ENCODE measurements at regions of chr2 and their contacts with region 1.

Region 1: DNA sequence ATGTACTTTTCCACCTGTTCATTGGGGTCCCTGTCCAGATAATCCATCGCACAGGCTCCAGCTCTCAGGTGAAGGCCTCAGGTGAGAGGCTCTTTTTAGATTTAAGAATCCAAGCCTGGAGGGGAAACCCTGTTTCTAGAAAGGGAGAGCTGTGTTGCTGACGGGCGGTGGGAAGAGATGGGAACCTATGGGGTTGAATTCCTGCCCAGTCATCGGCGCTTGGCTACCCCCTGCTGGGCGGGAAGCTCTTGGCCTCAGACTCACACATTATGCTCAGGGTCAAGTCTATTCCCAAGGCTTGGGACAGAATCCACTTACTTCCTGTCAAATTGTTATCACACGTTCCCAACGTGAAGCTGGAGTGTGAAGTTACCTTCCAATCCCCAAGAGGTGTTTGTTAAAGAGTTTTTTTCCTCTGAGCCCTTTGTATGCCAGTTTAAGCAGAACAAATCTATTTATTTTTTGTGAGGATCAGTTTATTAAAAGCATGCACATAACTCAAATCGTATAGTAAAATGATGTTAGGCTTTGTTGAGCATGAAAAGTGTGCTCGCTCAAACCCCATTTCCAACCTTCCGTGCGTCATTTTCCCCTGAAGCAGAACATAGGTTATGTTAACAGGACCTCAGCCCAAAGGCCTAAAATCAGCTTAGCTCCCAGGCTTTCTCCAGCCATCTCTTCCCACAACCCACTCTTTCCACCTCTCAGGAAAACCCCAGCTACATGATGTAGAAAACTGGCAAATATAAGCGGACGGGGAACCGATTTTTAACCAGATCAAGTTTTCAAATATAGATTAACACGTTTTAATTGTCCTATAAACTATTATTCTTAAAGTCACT is 181.7 kb upstream of the ETAA1 start:
- DNase-seq: peak; percentile 26
- H3K4me3 ChIP-seq: no peak overlapping the region
- H3K27ac ChIP-seq: peak overlapping the region; percentile 52 to 74 (median 64)
- H3K4me1 ChIP-seq: peaks cover 0 to 9% (median 0%) of the 10 kb centered on the region in 4 donors
- H3K27me3 ChIP-seq: no peaks in the 10 kb centered on the region
- CTCF ChIP-seq: peak; percentile 33 to 44 (median 35)
- EP300 ChIP-seq: no peak
- POLR2A ChIP-seq: no peak

Region 2: DNA sequence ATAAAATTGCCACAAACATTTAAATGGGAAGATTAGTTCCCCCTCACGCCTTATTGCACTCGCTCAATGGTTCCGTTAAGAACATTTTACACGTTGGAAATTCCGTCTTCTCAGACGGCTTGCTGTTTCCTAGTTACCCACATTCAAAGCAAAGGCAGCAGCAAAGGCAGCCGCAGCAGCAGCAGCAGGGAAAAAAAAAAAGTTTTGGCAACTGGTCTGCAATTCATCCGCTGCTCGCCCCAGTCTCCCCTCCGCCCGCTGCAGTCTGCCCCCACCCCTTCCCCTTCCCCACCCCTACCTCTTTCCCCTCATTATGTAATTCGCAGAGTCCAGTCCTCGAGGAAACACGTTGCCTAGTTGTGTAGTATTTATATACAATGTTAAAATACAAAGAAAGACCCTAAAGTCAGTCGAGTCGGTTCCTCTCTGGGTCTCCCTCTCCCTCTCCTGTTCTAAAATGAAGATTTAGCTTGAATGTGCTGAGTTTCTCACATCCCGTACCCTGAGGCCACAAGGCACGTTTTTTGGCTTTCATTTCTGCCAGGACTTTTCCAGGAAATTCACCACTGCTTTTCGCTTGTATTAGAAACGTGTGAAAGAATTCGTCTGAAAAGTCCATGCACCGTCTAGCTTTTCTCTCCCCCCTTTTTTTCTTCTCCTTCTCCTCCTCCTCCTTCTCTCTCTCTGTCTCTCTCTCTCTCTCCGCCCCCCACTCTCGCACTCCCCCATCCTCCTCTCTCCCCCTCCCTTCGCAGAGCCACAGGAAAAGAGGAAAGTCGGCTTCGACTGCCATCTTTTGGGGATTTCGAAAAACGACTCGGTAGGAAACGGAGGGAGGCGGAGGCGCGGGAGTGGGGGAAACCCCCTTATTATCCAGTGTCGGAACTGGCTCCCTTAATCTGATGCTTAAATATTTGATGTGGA is 640.5 kb before region 1 on chr2:
- in situ Hi-C with region 1: no loop called
- intact Hi-C with region 1: loop called (anchors 10 kb)
- DNase-seq: peak; percentile 44
- H3K4me3 ChIP-seq: peak overlapping the region; percentile 34 to 65 (median 46)
- H3K27ac ChIP-seq: peak overlapping the region; percentile 79 to 96 (median 90)
- H3K4me1 ChIP-seq: peaks cover 0 to 33% (median 9%) of the 10 kb centered on the region in 4 donors
- H3K27me3 ChIP-seq: peaks cover 70% of the 10 kb centered on the region
- CTCF ChIP-seq: peak in 4 of 5 experiments; percentile 15 to 34 (median 26)
- EP300 ChIP-seq: no peak
- POLR2A ChIP-seq: no peak

Region 3: GRCh38 chr2:66699793-66700676 is 515.4 kb before region 1 on chr2:
- in situ Hi-C with region 1: no loop called
- intact Hi-C with region 1: loop called (anchors 10 kb)
- DNase-seq: no peak
- H3K4me3 ChIP-seq: no peak overlapping the region
- H3K27ac ChIP-seq: peak overlapping the region; percentile 31 to 79 (median 74)
- H3K4me1 ChIP-seq: peaks cover 0 to 18% (median 6%) of the 10 kb centered on the region in 4 donors
- H3K27me3 ChIP-seq: no peaks in the 10 kb centered on the region
- CTCF ChIP-seq: no peak
- EP300 ChIP-seq: no peak
- POLR2A ChIP-seq: no peak

Region 4: DNA sequence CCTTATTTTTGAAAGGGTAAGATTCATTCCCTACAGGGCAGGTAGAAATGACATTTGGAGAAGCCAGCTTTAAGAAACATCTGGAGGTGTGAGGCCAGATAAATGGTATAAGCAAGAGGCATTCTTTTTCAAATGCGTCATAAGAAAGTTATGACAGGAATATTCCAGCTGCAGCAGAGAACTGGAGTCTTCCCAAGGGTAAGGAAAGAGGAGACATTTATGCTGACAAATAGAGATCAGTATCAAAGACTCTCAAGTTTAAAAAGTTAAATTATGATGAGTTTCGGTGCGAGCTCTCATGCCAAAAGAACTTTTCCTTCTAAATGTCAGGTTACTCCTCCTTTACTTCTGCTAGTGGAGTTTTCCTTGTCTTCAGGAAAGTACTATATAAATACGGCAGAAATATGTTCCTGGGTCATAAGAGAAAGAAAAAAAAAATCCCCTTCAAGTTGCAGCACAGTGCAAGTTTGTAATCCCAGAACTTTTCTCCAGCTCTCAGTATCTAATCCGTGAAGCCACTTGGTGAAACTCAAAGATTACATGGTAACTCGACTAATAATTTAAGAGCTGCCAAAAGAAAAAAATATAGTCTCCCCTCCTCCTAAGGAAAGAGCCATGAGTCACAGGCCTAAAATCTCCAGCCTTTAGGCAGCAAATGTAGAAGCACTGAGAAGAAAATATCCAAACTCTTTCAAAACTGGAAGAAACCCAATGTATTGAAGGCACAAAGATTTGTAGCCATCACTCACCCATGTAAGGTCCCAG is 352.4 kb before region 1 on chr2:
- in situ Hi-C with region 1: no loop called
- intact Hi-C with region 1: loop called (anchors 10 kb)
- DNase-seq: no peak
- H3K4me3 ChIP-seq: no peak overlapping the region
- H3K27ac ChIP-seq: peak overlapping the region; percentile 58 to 73 (median 65)
- H3K4me1 ChIP-seq: peaks cover 0 to 11% (median 0%) of the 10 kb centered on the region in 4 donors
- H3K27me3 ChIP-seq: no peaks in the 10 kb centered on the region
- CTCF ChIP-seq: no peak
- EP300 ChIP-seq: no peak
- POLR2A ChIP-seq: no peak

Region 5: GRCh38 chr2:68263632-68264031 is 1048.2 kb after region 1 on chr2:
- in situ Hi-C with region 1: no loop called
- intact Hi-C with region 1: no loop called
- DNase-seq: no peak
- H3K4me3 ChIP-seq: no peak overlapping the region
- H3K27ac ChIP-seq: no peak overlapping the region
- H3K4me1 ChIP-seq: peaks cover 0 to 5% (median 2%) of the 10 kb centered on the region in 4 donors
- H3K27me3 ChIP-seq: no peaks in the 10 kb centered on the region
- CTCF ChIP-seq: no peak
- EP300 ChIP-seq: no peak
- POLR2A ChIP-seq: no peak